PC-9 (cell line): ENCODE measurements at regions of chr2 and their contacts with region 1.

Region 1: GRCh38 chr2:224357098-224357901 is 44.6 kb downstream of the FAM124B start:
- DNase-seq: peak; percentile 72 to 77
- H3K4me3 ChIP-seq: no peak overlapping the region
- H3K27ac ChIP-seq: no peak overlapping the region
- H3K4me1 ChIP-seq: peaks cover 16% of the 10 kb centered on the region
- H3K27me3 ChIP-seq: no peaks in the 10 kb centered on the region
- CTCF ChIP-seq: peak; percentile 100

Region 2: GRCh38 chr2:224252631-224253030 is 104.7 kb before region 1 on chr2:
- CTCF ChIA-PET with region 1: no interaction called
- POLR2A ChIA-PET with region 1: no interaction called
- intact Hi-C with region 1: no loop called
- DNase-seq: no peak
- H3K4me3 ChIP-seq: no peak overlapping the region
- H3K27ac ChIP-seq: no peak overlapping the region
- H3K4me1 ChIP-seq: peaks cover 11% of the 10 kb centered on the region
- H3K27me3 ChIP-seq: no peaks in the 10 kb centered on the region
- CTCF ChIP-seq: no peak

Region 3: GRCh38 chr2:224449212-224450147 is 92.2 kb after region 1 on chr2:
- CTCF ChIA-PET with region 1: interaction called, 3 read pairs
- POLR2A ChIA-PET with region 1: no interaction called
- intact Hi-C with region 1: loop called (anchors 1 kb)
- DNase-seq: peak; percentile 24 to 50
- H3K4me3 ChIP-seq: no peak overlapping the region
- H3K27ac ChIP-seq: no peak overlapping the region
- H3K4me1 ChIP-seq: 0 out of 2 replicates have a peak, but pooled peaks cover 3% of the 10 kb centered on the region
- H3K27me3 ChIP-seq: no peaks in the 10 kb centered on the region
- CTCF ChIP-seq: peak; percentile 85

Region 4: DNA sequence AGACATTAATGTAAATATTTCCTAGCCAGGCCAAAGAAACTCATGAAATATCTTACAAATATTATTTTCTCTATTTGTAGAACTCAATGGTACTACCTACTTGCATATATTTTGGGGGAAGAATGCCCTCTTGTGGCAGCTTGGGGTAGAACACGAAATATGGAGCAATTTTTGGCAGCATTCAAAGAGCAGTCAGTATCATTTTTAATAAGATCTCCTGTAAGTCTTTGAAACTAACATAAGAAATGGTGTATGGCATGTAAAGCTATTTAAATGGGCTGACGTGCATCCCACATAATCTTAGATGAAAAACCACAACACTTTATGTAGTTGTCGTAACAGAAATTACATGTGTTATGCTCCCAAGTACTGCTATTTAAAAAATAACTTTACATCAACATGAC is 421.2 kb after region 1 on chr2:
- CTCF ChIA-PET with region 1: interaction called, 3 read pairs
- POLR2A ChIA-PET with region 1: no interaction called
- intact Hi-C with region 1: loop called (anchors 1 kb)
- DNase-seq: peak; percentile 67 to 75
- H3K4me3 ChIP-seq: no peak overlapping the region
- H3K27ac ChIP-seq: no peak overlapping the region
- H3K4me1 ChIP-seq: peaks cover 2% of the 10 kb centered on the region
- H3K27me3 ChIP-seq: no peaks in the 10 kb centered on the region
- CTCF ChIP-seq: peak; percentile 99